RWPE1 (cell line): ENCODE measurements at regions of chr20 and their contacts with region 1.

Region 1: GRCh38 chr20:33443512-33444239 is at the start of gene SNTA1:
- DNase-seq: peak; percentile 97
- H3K27ac ChIP-seq: peak within 1 kb of the TSS; percentile 54
- CTCF ChIP-seq: no peak

Region 2: GRCh38 chr20:33460711-33461110 is 17.0 kb after region 1 on chr20:
- CTCF ChIA-PET with region 1: interaction called, 10 read pairs
- POLR2A ChIA-PET with region 1: no interaction called
- DNase-seq: no peak
- H3K27ac ChIP-seq: no peak overlapping the region
- CTCF ChIP-seq: no peak